HepG2 (cell line): ENCODE measurements at regions of chr2 and their contacts with region 1.

Region 1: GRCh38 chr2:122451040-122451439 is 695.6 kb downstream of the TSN start:
- DNase-seq: peak; percentile 47
- ATAC-seq: peak; percentile 92
- H3K4me3 ChIP-seq: no peak overlapping the region
- H3K27ac ChIP-seq: no peak overlapping the region
- H3K4me1 ChIP-seq: no peaks in the 10 kb centered on the region
- H3K27me3 ChIP-seq: no peaks in the 10 kb centered on the region
- CTCF ChIP-seq: peak; percentile 88
- EP300 ChIP-seq: no peak
- POLR2A ChIP-seq: no peak
- RAD21 ChIP-seq: peak; percentile 66

Region 2: DNA sequence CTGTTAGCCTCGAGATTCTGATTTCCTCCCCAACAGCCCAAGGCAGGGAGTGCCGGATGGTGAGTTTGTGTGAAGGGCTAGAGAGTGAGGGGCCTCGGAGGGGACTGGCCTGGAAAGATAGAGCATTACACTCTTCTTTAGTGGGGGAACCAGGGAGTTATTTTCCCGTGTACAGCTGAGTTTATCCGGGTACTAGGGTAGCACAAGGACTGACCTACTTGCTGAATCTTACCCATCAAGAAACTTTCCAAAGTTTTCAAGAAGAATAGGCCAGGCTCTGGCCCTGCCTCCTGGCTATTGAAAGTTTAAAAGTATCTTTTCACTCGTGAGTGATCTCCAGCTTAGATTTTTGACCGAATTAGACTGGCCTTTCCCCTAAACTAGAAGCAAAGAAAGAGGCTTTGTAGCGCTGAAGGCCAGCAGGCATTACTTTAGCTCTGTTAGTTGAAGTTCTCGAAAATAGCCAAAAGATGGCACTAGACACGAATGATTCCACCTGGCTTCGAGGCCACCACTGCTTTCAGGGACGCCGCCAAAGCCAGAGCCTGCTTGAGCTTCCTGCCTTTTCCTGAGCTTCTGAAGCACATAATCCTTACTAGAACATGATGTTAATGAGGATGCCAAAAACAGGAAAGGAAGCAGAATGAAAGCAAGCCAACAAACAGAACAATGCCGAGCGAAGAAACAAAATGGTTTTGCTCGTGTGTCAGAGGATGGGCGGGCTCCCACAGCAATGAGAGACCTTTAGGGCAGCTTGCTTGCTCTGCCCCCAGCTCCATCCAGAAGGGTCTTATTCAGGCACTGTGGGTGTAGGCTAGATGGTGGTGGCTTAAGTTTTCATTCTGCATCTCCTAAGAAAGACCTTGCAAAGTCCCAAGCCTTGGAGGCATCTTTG is 639.8 kb before region 1 on chr2:
- CTCF ChIA-PET with region 1: interaction called, 4 read pairs
- POLR2A ChIA-PET with region 1: no interaction called
- in situ Hi-C with region 1: no loop called
- intact Hi-C with region 1: loop called (anchors 2 kb)
- DNase-seq: peak; percentile 69
- ATAC-seq: peak; percentile 97
- H3K4me3 ChIP-seq: no peak overlapping the region
- H3K27ac ChIP-seq: no peak overlapping the region
- H3K4me1 ChIP-seq: peaks cover 14% of the 10 kb centered on the region
- H3K27me3 ChIP-seq: no peaks in the 10 kb centered on the region
- CTCF ChIP-seq: peak; percentile 89
- EP300 ChIP-seq: no peak
- POLR2A ChIP-seq: no peak
- RAD21 ChIP-seq: peak; percentile 74

Region 3: DNA sequence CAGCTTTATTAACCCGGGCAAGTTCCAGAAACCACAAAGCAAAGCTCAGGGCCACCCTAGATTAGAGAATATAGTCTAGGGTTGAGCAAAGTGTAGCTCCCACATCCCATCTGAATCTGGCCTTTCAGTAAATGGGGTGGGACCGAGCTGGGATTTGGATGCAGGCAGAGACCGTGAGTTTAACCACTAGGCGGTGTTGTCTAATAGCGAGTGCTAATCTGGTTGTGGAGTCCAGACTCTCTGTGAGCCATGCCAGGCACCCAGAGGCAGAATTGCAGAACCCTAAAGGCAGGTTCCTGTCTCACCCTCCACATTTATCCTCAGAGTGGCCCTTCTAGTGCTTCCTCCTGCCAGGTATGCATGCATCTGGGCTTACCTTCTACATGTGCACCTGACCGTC is 259.7 kb before region 1 on chr2:
- CTCF ChIA-PET with region 1: interaction called, 14 read pairs
- POLR2A ChIA-PET with region 1: no interaction called
- in situ Hi-C with region 1: loop called (anchors 5 kb)
- intact Hi-C with region 1: loop called (anchors 1 kb)
- DNase-seq: peak; percentile 41
- ATAC-seq: peak; percentile 97
- H3K4me3 ChIP-seq: no peak overlapping the region
- H3K27ac ChIP-seq: no peak overlapping the region
- H3K4me1 ChIP-seq: no peaks in the 10 kb centered on the region
- H3K27me3 ChIP-seq: peaks cover 2 to 5% of the 10 kb centered on the region in 2 experiments; a peak in 1 of 5 replicates
- CTCF ChIP-seq: peak; percentile 75
- EP300 ChIP-seq: no peak
- POLR2A ChIP-seq: no peak
- RAD21 ChIP-seq: peak; percentile 34; the same call in 1 of the 2 replicates

Region 4: GRCh38 chr2:122423934-122424333 is 27.1 kb before region 1 on chr2:
- CTCF ChIA-PET with region 1: interaction called, 6 read pairs
- POLR2A ChIA-PET with region 1: no interaction called
- in situ Hi-C with region 1: no loop called
- intact Hi-C with region 1: loop called (anchors 1 kb)
- DNase-seq: peak; percentile 18
- ATAC-seq: peak; percentile 78
- H3K4me3 ChIP-seq: no peak overlapping the region
- H3K27ac ChIP-seq: no peak overlapping the region
- H3K4me1 ChIP-seq: no peaks in the 10 kb centered on the region
- H3K27me3 ChIP-seq: no peaks in the 10 kb centered on the region
- CTCF ChIP-seq: peak; percentile 46
- EP300 ChIP-seq: no peak
- POLR2A ChIP-seq: no peak
- RAD21 ChIP-seq: no peak